Posterior vena cava (tissue), 2 donors: ENCODE measurements at regions of chr17 and their contacts with region 1.

Region 1: DNA sequence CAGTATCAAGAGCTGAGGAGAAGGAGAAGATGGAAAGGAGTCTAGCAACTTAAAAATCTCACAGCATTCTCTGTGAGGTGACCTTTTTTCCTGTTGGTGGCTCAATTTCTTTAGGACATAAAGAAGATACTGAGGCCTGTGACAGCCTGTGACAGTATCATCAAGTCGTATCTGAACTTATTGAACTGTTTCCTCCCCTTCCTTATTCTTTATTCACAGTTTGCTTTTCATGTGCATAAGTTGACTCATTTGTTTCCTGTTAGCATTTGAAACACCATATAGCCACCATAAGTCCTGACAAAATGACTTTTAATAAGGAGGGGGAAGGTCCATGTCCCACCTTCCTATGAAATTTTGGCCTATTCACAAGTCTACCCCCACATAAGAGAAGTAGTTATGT is 8.9 kb downstream of the UNK start:
- DNase-seq: no peak

Region 2: DNA sequence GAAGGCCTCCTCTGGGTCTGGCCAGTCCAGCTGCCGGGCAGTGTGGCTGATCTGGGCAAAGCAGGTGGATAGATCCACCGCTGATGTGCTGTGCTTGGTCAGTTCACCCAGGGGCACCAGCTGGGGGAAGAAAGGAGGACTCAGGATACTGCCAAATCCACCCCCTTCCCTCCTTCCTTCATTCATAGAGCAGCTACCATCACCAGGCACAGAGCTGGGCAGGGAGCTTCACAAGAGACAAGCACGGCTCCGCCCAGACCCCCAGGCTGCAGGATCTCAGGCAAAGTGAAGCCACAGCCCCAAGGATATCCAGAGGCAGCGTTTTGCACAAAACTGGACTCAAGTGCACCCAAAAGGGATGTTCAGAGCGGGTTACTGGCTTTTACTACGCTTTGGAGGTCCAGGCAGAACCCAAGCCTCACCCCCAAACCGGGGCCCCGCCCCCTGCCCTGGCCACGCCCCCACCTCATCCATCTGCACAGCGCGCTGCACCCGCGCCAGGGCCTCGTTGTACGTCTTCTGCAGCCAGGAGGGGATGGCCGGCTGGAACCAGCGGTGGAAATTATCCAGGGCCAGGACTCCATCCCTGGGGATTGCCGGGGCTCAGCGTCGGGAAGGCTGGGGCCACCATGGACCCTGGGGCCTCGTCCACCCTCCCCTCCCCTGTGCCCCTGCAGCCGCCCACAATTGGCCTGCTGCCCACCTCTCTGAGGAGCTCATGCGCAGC is 41.6 kb after region 1 on chr17:
- intact Hi-C with region 1: loop called in 1 of 2 experiments (anchors 5 kb)
- DNase-seq: no peak